ENCODE measurements at regions of chr1 and their contacts with region 1.

Region 1: GRCh38 chr1:174999216-174999925 is 376 bp upstream of the CACYBP start:
- DNase-seq: peak; percentile 94 to 95
- H3K4me3 ChIP-seq: peak overlapping the region; percentile 94
- H3K27ac ChIP-seq: peak overlapping the region; percentile 97
- H3K4me1 ChIP-seq: peaks cover 41% of the 10 kb centered on the region
- H3K27me3 ChIP-seq: no peaks in the 10 kb centered on the region
- CTCF ChIP-seq: no peak

Region 2: GRCh38 chr1:174262349-174263241 is 736.8 kb before region 1 on chr1:
- CTCF ChIA-PET with region 1: no interaction called
- POLR2A ChIA-PET with region 1: no interaction called
- intact Hi-C with region 1: loop called (anchors 5 kb)
- DNase-seq: peak in 1 of 2 experiments; percentile 6
- H3K4me3 ChIP-seq: no peak overlapping the region
- H3K27ac ChIP-seq: no peak overlapping the region
- H3K4me1 ChIP-seq: no peaks in the 10 kb centered on the region
- H3K27me3 ChIP-seq: no peaks in the 10 kb centered on the region
- CTCF ChIP-seq: peak; percentile 84

Region 3: DNA sequence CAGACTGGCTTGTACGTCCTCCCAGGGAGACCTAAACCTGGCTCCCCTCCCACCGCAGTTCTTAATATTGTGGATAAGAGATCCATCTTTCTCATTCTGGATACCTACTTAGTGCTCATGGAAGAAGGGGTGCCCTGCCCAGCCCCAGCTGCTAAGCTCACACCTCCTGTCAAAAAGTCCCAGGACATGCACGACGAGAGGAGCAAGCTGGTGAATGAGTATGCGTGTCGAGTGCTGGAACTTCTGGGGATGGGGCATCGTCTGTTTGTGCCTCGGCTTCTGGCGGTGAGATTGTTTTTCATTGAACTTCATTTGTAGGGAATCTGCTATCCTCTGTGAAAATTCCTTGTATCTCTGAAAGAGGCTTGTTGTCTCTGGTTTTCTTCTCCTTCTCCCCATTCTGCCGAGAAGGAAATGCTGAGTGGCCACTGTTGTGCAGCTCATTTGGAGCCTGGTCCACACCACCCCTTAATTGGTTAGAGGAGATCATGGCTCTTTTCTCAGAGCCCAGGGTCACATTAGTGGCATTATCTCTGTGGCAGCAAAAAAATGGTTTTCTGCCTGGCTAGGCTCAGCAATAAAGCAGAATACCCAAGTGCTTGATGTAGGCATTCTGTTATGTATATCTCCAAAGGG is 199.0 kb before region 1 on chr1:
- CTCF ChIA-PET with region 1: no interaction called
- POLR2A ChIA-PET with region 1: interaction called, 7 read pairs
- intact Hi-C with region 1: loop called (anchors 1 kb)
- DNase-seq: no peak
- H3K4me3 ChIP-seq: peak overlapping the region; percentile 52; the same call in 1 of the 2 replicates
- H3K27ac ChIP-seq: peak overlapping the region; percentile 72; the same call in 1 of the 2 replicates
- H3K4me1 ChIP-seq: peaks cover 28% of the 10 kb centered on the region
- H3K27me3 ChIP-seq: no peaks in the 10 kb centered on the region
- CTCF ChIP-seq: no peak

Region 4: DNA sequence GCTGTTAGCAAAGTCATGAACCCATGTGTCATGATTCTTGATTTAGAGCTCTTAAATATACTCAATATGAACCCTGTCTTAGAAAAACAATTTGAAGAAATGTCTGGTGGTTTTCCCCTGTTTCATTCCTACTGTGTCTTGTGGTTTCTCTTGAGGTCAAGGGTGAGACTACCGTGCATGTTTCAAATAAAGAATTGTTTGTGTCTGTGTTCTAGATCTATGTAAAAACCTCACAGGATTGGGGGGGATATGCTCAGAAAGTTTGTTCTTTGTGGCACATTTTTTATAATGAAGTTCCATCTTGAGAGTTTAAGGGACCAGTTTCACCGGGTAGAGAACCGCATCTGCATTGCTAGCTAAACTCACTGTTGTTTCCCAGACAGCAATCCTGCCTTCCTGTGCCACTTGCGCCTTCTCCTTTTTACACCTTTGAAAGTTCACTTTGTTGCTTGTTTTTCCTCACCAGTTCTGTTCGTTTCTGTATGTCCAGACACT is 30.6 kb before region 1 on chr1:
- CTCF ChIA-PET with region 1: no interaction called
- POLR2A ChIA-PET with region 1: no interaction called
- intact Hi-C with region 1: loop called (anchors 2 kb)
- DNase-seq: peak in 1 of 2 experiments; percentile 85
- H3K4me3 ChIP-seq: no peak overlapping the region
- H3K27ac ChIP-seq: peak overlapping the region; percentile 58
- H3K4me1 ChIP-seq: peaks cover 74% of the 10 kb centered on the region
- H3K27me3 ChIP-seq: no peaks in the 10 kb centered on the region
- CTCF ChIP-seq: no peak

Region 5: DNA sequence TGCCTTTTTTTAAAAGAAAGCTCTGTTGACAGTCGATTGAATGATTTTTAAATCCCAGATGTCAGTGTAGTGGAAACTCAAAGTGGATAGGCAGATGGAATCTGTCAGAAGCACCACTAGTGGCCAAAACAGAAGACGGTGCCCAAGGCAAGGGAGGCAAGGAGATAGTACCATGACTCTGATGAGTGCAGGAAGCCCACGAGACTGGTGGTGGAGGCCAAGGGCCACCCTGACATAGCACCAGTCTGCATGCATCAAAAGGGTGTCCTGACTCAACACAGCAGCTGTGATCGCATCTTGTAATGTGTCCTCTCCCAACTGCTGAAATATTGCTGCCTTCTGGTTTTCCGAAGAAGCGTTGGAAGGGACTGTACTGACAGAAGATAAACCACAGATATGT is 1339.5 kb after region 1 on chr1:
- CTCF ChIA-PET with region 1: no interaction called
- POLR2A ChIA-PET with region 1: interaction called, 10 read pairs
- intact Hi-C with region 1: no loop called
- DNase-seq: no peak
- H3K4me3 ChIP-seq: no peak overlapping the region
- H3K27ac ChIP-seq: no peak overlapping the region
- H3K4me1 ChIP-seq: no peaks in the 10 kb centered on the region
- H3K27me3 ChIP-seq: peaks cover 3% of the 10 kb centered on the region; the same call in 1 of the 2 replicates
- CTCF ChIP-seq: no peak